Lower leg skin (tissue), 4 donors: ENCODE measurements at regions of chr6 and their contacts with region 1.

Region 1: GRCh38 chr6:53986165-53986720 is 125.0 kb upstream of the MLIP start:
- DNase-seq: peak in 1 of 2 donors; percentile 37
- H3K4me3 ChIP-seq: no peak overlapping the region
- CTCF ChIP-seq: no peak
- POLR2A ChIP-seq: no peak

Region 2: GRCh38 chr6:54071821-54072340 is 85.6 kb after region 1 on chr6:
- intact Hi-C with region 1: no loop called
- DNase-seq: no peak
- H3K4me3 ChIP-seq: no peak overlapping the region
- CTCF ChIP-seq: no peak
- POLR2A ChIP-seq: no peak

Region 3: DNA sequence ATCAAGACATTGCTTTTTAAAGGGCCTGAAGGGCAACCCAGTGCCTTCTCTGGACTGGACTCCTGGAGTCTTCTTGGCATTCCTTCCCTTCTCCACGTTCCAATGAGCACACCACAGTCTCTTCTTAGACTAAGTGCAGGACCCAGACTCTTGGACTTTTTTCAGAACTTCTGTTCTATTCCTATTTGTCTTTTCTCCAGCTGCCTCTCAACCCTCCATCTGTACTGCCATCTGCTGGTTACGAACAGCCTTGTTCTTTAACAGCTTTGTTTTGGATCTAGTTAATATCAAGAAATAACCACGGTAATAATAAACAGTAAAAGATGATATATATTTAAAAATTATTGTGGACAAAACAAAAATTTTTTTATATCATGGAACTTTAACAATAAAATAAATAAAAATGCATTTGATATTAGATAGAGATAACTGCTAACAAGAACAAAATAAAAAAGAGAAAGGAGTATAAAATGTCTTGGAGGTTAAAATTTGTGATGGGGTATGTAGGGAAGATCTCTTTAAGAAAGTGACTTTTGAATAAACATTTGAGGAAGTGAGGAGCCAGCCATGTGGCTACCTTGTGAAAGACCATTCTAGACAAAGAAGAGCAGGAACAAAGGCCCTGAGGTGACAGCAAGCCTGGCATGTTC is 1083.0 kb after region 1 on chr6:
- intact Hi-C with region 1: loop called (anchors 10 kb)
- DNase-seq: no peak
- H3K4me3 ChIP-seq: no peak overlapping the region
- CTCF ChIP-seq: no peak
- POLR2A ChIP-seq: no peak